CD4-positive, alpha-beta memory T cell (primary cell): ENCODE measurements at regions of chr2 and their contacts with region 1.

Region 1: DNA sequence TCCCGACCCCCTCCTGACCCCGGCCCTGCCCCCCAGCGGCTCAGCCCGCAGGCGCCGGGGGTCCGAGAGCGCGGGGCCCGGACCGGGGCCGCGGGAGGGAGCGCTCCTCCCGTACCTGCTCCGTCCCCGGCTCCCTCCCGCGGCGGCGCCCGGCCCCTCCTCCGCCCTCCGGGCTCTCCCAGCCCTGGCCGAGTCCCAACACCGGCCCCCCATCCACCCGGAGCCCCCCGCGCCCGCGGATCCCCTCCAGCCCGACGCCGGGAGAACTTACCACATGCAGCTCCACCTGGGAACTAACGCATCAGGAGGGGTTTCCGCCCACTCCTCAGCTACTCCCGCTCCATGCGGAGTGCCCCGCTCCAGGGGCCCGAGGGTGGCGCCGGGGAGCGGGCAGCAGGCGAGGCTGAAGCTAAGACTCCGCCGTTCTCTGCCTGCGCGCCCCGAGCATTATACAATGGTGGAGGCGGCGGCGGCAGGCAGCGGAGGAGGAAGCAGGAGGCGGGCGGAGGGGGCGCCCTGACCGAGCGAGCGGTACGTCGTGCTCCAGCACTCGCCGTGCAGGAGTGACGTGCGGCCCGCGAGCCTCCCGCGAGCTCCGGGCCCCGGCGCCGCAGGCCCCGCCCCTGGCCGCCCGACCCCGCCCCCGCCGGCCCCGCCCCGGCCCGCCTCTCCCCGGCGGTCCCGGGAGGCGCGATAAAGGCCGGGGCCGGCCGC is at the start of gene SERTAD2:
- DNase-seq: peak; percentile 84 to 89 (median 88)
- H3K4me3 ChIP-seq: peak within 1 kb of the TSS; percentile 70 to 83
- H3K4me3 Mint-ChIP-seq: peak within 1 kb of the TSS; percentile 90 to 99 (median 92)
- H3K27ac ChIP-seq: peak within 1 kb of the TSS; percentile 83
- H3K27ac Mint-ChIP-seq: peak within 1 kb of the TSS; percentile 90 to 98 (median 95)
- H3K4me1 ChIP-seq: peaks cover 53% of the 10 kb centered on the region
- H3K4me1 Mint-ChIP-seq: peaks cover 34 to 63% (median 50%) of the 10 kb centered on the region in 4 donors
- H3K27me3 ChIP-seq: no peaks in the 10 kb centered on the region
- H3K27me3 Mint-ChIP-seq: no peaks in the 10 kb centered on the region
- total RNA-seq, gene SERTAD2: 23.5 to 24.6 TPM

Region 2: DNA sequence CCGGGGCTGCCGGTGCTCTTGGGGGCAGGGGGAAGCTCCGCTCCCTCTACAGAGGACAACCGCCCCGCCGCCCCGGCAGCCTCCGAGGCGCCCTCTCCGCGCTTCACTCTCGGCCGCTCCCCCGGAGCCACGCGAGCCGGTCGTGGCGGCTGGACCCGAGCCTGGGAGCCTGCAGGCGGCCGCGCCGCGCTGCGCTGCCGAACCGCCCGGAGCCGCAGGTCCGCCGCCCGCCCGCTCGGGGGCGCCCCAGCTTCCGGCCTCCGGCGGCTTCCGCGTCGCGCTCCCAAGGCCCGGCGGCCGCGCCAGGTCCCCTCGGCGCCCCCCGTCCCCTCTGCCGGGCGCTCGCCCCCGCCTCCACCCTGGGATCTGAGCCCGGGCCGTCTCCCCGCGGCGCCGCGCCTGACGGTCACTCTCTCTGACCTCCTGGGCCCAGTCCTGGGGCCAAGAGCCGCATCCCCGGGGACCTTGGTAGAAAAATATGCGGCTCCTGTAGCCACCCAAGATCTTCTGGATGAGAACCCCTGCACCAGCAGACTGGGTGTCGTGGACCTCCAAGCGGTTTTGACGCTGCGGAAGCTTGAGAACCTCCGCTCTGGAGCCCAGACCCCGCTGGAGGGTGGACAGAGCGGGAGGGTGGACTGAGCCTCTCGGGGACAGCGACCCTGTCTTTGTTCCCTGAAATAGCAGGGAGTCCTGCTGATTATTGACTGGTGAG is 44.1 kb before region 1 on chr2:
- CTCF ChIA-PET with region 1: interaction called, 43 read pairs
- POLR2A ChIA-PET with region 1: interaction called, 63 read pairs
- intact Hi-C with region 1: loop called (anchors 2 kb)
- DNase-seq: peak; percentile 58 to 79 (median 76)
- H3K4me3 ChIP-seq: peak overlapping the region in 1 of 2 donors; percentile 61
- H3K4me3 Mint-ChIP-seq: peak overlapping the region; percentile 64 to 79 (median 75)
- H3K27ac ChIP-seq: peak overlapping the region; percentile 57
- H3K27ac Mint-ChIP-seq: peak overlapping the region; percentile 35 to 83 (median 70)
- H3K4me1 ChIP-seq: peaks cover 38% of the 10 kb centered on the region
- H3K4me1 Mint-ChIP-seq: peaks cover 10 to 33% (median 22%) of the 10 kb centered on the region in 4 donors
- H3K27me3 ChIP-seq: no peaks in the 10 kb centered on the region
- H3K27me3 Mint-ChIP-seq: no peaks in the 10 kb centered on the region

Region 3: DNA sequence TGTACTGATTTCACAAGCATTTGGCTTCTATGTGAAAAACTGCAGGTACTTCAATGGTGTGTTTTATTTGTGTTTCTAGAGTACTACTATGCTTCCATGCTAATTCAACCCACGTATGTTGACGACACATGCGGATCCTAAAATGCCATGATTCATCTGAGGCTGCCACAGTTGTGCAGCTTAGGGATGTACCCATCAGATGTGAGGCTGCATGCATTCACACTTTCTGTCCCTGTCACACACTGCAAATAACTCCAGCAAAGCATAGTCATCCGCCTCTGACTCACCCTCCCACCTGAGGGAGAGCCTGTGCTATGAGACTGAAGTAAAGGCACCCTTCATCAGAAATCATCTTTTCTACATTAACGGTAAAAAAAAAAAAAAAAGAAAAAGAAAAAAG is 22.4 kb after region 1 on chr2:
- CTCF ChIA-PET with region 1: interaction called, 20 read pairs
- POLR2A ChIA-PET with region 1: interaction called, 20 read pairs
- intact Hi-C with region 1: no loop called
- DNase-seq: no peak
- H3K4me3 ChIP-seq: no peak overlapping the region
- H3K4me3 Mint-ChIP-seq: no peak overlapping the region
- H3K27ac ChIP-seq: no peak overlapping the region
- H3K27ac Mint-ChIP-seq: no peak overlapping the region
- H3K4me1 ChIP-seq: no peaks in the 10 kb centered on the region
- H3K4me1 Mint-ChIP-seq: peaks cover 0 to 20% (median 12%) of the 10 kb centered on the region in 4 donors
- H3K27me3 ChIP-seq: no peaks in the 10 kb centered on the region
- H3K27me3 Mint-ChIP-seq: no peaks in the 10 kb centered on the region

Region 4: DNA sequence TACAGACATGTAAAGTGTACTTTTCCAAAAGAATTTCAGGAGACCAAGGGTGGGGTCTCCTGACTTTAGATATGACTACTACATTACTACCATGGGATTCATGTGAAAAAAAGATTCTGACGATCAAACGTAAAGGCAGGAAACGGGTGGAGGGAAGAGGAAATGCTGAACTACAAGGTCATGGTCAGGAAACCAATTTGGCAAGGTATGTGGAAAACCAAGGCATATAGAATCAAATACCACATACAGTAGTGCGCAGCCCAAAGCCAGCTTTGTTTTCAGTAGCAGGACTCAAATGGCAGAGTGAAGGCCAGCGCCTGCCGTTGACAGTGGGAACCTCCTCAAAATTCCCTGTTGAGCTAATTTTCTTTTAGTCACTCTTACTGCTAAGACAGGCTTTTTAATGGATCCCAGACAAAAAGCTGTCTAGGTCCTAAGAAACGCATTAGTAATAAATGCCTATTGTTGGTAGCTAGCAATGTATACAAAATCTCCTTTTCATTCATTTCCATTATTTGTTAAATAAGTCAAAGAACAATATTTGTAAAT is 57.8 kb after region 1 on chr2:
- CTCF ChIA-PET with region 1: interaction called, 5 read pairs
- POLR2A ChIA-PET with region 1: interaction called, 10 read pairs
- intact Hi-C with region 1: no loop called
- DNase-seq: peak in 3 of 5 donors; percentile 6 to 18 (median 13)
- H3K4me3 ChIP-seq: no peak overlapping the region
- H3K4me3 Mint-ChIP-seq: peak overlapping the region in 7 of 8 donors; percentile 20 to 77 (median 56)
- H3K27ac ChIP-seq: no peak overlapping the region
- H3K27ac Mint-ChIP-seq: peak overlapping the region in 2 of 7 donors; percentile 14 to 59
- H3K4me1 ChIP-seq: peaks cover 13% of the 10 kb centered on the region
- H3K4me1 Mint-ChIP-seq: peaks cover 8 to 14% (median 10%) of the 10 kb centered on the region in 4 donors
- H3K27me3 ChIP-seq: no peaks in the 10 kb centered on the region
- H3K27me3 Mint-ChIP-seq: no peaks in the 10 kb centered on the region

Region 5: DNA sequence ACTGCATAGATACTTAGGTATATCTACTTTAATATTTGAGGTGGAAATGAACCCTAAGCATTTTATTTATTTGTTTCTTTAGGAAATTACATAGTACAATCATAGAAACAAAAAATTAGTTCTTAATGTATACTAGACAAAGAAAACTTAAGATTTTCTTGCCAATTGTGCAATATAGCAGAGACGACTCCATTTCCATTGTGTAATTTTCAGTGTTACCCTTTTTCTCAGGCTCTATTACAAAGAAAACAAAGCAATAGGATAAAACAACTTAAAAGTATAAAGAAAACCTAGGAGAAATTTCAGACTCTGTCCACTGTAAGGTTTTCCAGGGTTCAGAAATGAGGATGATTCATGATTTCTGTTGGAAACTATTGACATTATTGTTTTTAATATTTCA is 89.2 kb after region 1 on chr2:
- CTCF ChIA-PET with region 1: interaction called, 101 read pairs
- POLR2A ChIA-PET with region 1: interaction called, 298 read pairs
- intact Hi-C with region 1: no loop called
- DNase-seq: no peak
- H3K4me3 ChIP-seq: no peak overlapping the region
- H3K4me3 Mint-ChIP-seq: no peak overlapping the region
- H3K27ac ChIP-seq: no peak overlapping the region
- H3K27ac Mint-ChIP-seq: no peak overlapping the region
- H3K4me1 ChIP-seq: peaks cover under 1% of the 10 kb centered on the region
- H3K4me1 Mint-ChIP-seq: peaks cover 0 to 2% (median under 1%) of the 10 kb centered on the region in 4 donors
- H3K27me3 ChIP-seq: no peaks in the 10 kb centered on the region
- H3K27me3 Mint-ChIP-seq: no peaks in the 10 kb centered on the region

Region 6: GRCh38 chr2:64819774-64820696 is 166.5 kb after region 1 on chr2:
- CTCF ChIA-PET with region 1: interaction called, 11 read pairs
- POLR2A ChIA-PET with region 1: interaction called, 29 read pairs
- intact Hi-C with region 1: no loop called
- DNase-seq: peak; percentile 52 to 67 (median 64)
- H3K4me3 ChIP-seq: peak overlapping the region in 1 of 2 donors; percentile 29
- H3K4me3 Mint-ChIP-seq: peak overlapping the region; percentile 66 to 93 (median 80)
- H3K27ac ChIP-seq: peak overlapping the region; percentile 44
- H3K27ac Mint-ChIP-seq: peak overlapping the region; percentile 72 to 98 (median 92)
- H3K4me1 ChIP-seq: peaks cover 23% of the 10 kb centered on the region
- H3K4me1 Mint-ChIP-seq: peaks cover 15 to 34% (median 21%) of the 10 kb centered on the region in 4 donors
- H3K27me3 ChIP-seq: no peaks in the 10 kb centered on the region
- H3K27me3 Mint-ChIP-seq: peaks cover 0 to 2% of the 10 kb centered on the region in 2 donors